CD4-positive, alpha-beta T cell (primary cell): ENCODE measurements at regions of chr12 and their contacts with region 1.

Region 1: DNA sequence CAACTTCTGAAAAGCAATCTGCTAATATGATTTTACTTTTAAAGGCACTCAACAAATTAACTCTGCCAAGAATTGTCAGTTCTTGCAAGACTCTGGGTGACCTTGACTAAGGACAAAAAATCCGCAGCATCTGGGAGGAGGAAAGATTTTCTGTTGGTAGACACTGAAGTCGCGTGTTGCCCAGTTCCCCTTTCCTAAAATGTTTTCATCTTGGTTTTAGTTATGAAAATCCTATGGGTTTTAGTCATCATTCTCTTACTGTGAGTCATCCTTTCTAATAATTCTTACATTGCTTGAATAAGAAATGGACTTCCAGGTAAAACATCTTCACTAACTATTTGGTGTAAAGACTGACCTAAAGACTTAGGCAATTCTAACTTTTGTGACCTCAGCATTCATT is 9.1 kb downstream of the GSG1 start:
- DNase-seq: peak in 2 of 14 experiments; percentile 52 to 61
- ATAC-seq: no peak
- H3K4me3 ChIP-seq: no peak overlapping the region
- H3K4me3 Mint-ChIP-seq: no peak overlapping the region
- H3K27ac ChIP-seq: no peak overlapping the region
- H3K27ac Mint-ChIP-seq: no peak overlapping the region
- H3K4me1 ChIP-seq: peaks cover 16% of the 10 kb centered on the region
- H3K4me1 Mint-ChIP-seq: peaks cover 19% of the 10 kb centered on the region
- H3K27me3 ChIP-seq: no peaks in the 10 kb centered on the region
- H3K27me3 Mint-ChIP-seq: no peaks in the 10 kb centered on the region
- CTCF ChIP-seq: no peak

Region 2: GRCh38 chr12:12813120-12814101 is 280.9 kb before region 1 on chr12 and contains the start of gene DDX47:
- CTCF ChIA-PET with region 1: no interaction called
- POLR2A ChIA-PET with region 1: no interaction called
- intact Hi-C with region 1: loop called in 1 of 2 experiments (anchors 10 kb)
- DNase-seq: peak; percentile 94 to 99 (median 97)
- ATAC-seq: peak; percentile 83
- H3K4me3 ChIP-seq: peak within 1 kb of the TSS; percentile 95
- H3K4me3 Mint-ChIP-seq: peak within 1 kb of the TSS; percentile 94
- H3K27ac ChIP-seq: peak within 1 kb of the TSS; percentile 74 to 88
- H3K27ac Mint-ChIP-seq: peak within 1 kb of the TSS; percentile 91
- H3K4me1 ChIP-seq: peaks cover 42% of the 10 kb centered on the region
- H3K4me1 Mint-ChIP-seq: peaks cover 65% of the 10 kb centered on the region
- H3K27me3 ChIP-seq: no peaks in the 10 kb centered on the region
- H3K27me3 Mint-ChIP-seq: no peaks in the 10 kb centered on the region
- CTCF ChIP-seq: peak; percentile 96
- total RNA-seq, gene DDX47: 153 TPM

Region 3: DNA sequence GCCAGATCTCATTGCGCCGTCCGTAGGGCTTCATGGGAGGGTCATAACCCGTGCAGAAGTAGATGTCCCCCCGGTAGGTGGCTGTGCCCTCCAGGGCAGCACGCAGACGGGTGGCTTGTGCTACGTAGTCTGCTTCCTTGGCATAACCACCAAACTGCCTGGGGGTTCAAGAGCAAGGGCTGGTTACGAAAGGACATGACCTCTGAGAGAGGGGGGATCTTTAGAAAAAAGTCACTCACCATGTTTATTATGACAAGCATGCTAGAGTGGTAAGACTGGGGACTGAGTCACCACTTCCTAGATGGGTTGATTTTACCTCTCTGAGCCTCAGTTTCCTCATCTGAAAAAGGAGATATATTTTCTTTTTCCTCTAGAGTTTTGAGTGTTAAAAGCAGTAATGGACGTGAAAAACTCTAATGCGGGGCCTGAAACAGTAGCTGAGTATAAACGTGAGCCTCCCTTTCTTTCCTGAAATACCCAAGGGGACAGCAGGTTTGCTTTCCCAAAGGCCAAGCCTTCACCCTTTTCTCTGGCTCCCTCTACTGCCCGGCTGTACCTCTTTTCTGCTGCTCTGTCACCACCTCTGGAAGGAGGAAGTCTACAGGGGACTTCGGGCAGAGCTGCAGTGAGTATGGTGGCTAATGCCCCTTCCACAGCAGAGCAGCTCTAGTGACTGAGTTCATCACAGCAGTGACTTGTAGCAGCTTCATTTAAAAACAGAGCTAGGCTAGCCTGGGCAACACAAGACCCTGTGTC is 118.8 kb before region 1 on chr12:
- CTCF ChIA-PET with region 1: no interaction called
- POLR2A ChIA-PET with region 1: no interaction called
- intact Hi-C with region 1: no loop called
- DNase-seq: peak in 1 of 14 experiments; percentile 9
- ATAC-seq: no peak
- H3K4me3 ChIP-seq: no peak overlapping the region
- H3K4me3 Mint-ChIP-seq: no peak overlapping the region
- H3K27ac ChIP-seq: no peak overlapping the region
- H3K27ac Mint-ChIP-seq: no peak overlapping the region
- H3K4me1 ChIP-seq: no peaks in the 10 kb centered on the region
- H3K4me1 Mint-ChIP-seq: no peaks in the 10 kb centered on the region
- H3K27me3 ChIP-seq: no peaks in the 10 kb centered on the region
- H3K27me3 Mint-ChIP-seq: no peaks in the 10 kb centered on the region
- CTCF ChIP-seq: no peak